Activated CD4-positive, alpha-beta T cell treated with anti-CD3 and anti-CD28 coated beads, Interleukin-2, amount 10 ng/mL, durations not matched to agents 24 days and 14 days (primary cell): ENCODE measurements at regions of chr22 and their contacts with region 1.

Region 1: DNA sequence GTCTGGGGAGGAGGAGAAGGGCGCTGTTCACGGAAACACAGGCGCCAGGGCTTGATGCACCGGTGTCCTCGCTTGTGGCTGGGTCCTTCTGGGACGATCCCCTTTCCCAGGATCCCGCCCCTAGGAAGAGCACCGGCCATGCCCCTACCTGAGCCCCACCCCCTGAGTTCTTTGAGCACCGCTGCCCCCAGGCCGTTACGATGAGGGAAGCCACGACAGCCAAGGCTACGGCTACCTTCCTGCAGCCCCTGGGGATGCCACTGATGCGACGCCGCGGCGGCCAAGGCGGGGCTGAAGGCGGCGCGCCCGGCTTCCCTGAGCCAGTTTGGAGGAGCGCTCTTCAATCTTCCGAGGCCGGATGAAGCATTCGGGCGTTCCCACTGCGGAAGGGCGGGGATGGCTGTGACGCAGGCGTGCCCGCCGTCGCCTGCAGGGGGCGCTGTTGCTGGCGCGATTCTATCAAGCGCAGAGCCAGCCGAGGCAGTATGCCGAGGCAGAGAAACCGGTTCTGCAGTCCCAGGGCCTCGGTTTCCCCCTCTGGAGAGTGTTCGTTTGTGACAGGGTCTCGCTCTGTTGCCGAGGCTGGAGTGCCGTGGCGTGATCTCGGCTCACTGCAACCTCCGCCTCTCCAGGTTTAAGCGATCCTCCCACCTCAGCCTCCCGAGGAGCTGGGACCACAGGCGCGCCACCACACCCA is 9.7 kb upstream of the NEFH start:
- DNase-seq: peak; percentile 95
- H3K4me3 Mint-ChIP-seq: peak overlapping the region; percentile 75
- H3K27ac Mint-ChIP-seq: no peak overlapping the region
- H3K4me1 Mint-ChIP-seq: peaks cover 4% of the 10 kb centered on the region
- H3K27me3 Mint-ChIP-seq: peaks cover 19% of the 10 kb centered on the region

Region 2: GRCh38 chr22:29380181-29380681 is 90.1 kb before region 1 on chr22:
- intact Hi-C with region 1: no loop called
- DNase-seq: no peak
- H3K4me3 Mint-ChIP-seq: no peak overlapping the region
- H3K27ac Mint-ChIP-seq: no peak overlapping the region
- H3K4me1 Mint-ChIP-seq: peaks cover 37% of the 10 kb centered on the region
- H3K27me3 Mint-ChIP-seq: no peaks in the 10 kb centered on the region

Region 3: GRCh38 chr22:29394931-29395581 is 75.3 kb before region 1 on chr22:
- intact Hi-C with region 1: loop called (anchors 10 kb)
- DNase-seq: peak; percentile 90
- H3K4me3 Mint-ChIP-seq: no peak overlapping the region
- H3K27ac Mint-ChIP-seq: no peak overlapping the region
- H3K4me1 Mint-ChIP-seq: peaks cover 8% of the 10 kb centered on the region
- H3K27me3 Mint-ChIP-seq: peaks cover 6% of the 10 kb centered on the region

Region 4: DNA sequence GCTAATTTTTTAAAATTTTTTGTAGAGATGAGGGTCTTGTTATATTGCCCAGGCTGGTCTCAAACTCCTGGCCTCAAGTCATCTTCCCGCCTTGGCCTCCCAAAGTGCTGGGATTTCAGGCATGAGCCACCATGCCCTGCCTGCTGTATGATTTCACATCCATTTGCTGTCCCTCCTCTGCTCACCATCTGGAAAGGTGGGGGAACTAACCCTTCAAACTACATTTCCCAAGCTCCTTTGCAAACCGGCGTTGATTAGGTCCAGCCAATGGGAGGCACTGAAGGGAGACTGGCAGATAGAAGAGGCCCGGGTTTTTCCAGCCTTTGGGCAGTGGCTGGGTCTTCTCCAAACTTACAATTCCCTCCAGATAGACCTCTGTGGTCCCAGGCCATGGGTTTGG is 12.6 kb before region 1 on chr22:
- intact Hi-C with region 1: no loop called
- DNase-seq: peak; percentile 68
- H3K4me3 Mint-ChIP-seq: no peak overlapping the region
- H3K27ac Mint-ChIP-seq: no peak overlapping the region
- H3K4me1 Mint-ChIP-seq: no peaks in the 10 kb centered on the region
- H3K27me3 Mint-ChIP-seq: no peaks in the 10 kb centered on the region